Mammary epithelial cell (primary cell): ENCODE measurements at regions of chr3 and their contacts with region 1.

Region 1: GRCh38 chr3:152961323-152961722 is 126.4 kb downstream of the P2RY1 start:
- DNase-seq: peak; percentile 34
- H3K4me3 ChIP-seq: no peak overlapping the region
- H3K27ac ChIP-seq: no peak overlapping the region
- H3K4me1 ChIP-seq: no peaks in the 10 kb centered on the region
- H3K27me3 ChIP-seq: no peaks in the 10 kb centered on the region
- CTCF ChIP-seq: peak; percentile 36 to 60

Region 2: GRCh38 chr3:152508705-152509104 is 452.6 kb before region 1 on chr3:
- CTCF ChIA-PET with region 1: no interaction called
- dilution Hi-C with region 1: no loop called
- in situ Hi-C with region 1: no loop called
- intact Hi-C with region 1: loop called (anchors 10 kb)
- DNase-seq: peak; percentile 3
- H3K4me3 ChIP-seq: no peak overlapping the region
- H3K27ac ChIP-seq: no peak overlapping the region
- H3K4me1 ChIP-seq: no peaks in the 10 kb centered on the region
- H3K27me3 ChIP-seq: peaks cover 13% of the 10 kb centered on the region
- CTCF ChIP-seq: peak; percentile 11 to 40